Endothelial cell of umbilical vein (primary cell): ENCODE measurements at regions of chr11 and their contacts with region 1.

Region 1: GRCh38 chr11:79076526-79077115 is 364.2 kb downstream of the TENM4 start:
- DNase-seq: peak; percentile 50
- H3K4me3 ChIP-seq: no peak overlapping the region
- H3K27ac ChIP-seq: no peak overlapping the region
- H3K4me1 ChIP-seq: no peaks in the 10 kb centered on the region
- H3K27me3 ChIP-seq: no peaks in the 10 kb centered on the region
- CTCF ChIP-seq: peak; percentile 63 to 69
- POLR2A ChIP-seq: no peak

Region 2: GRCh38 chr11:78902771-78903507 is 173.7 kb before region 1 on chr11:
- CTCF ChIA-PET with region 1: interaction called, 4 read pairs
- POLR2A ChIA-PET with region 1: no interaction called
- dilution Hi-C with region 1: no loop called
- intact Hi-C with region 1: loop called (anchors 1 kb)
- DNase-seq: peak; percentile 4
- H3K4me3 ChIP-seq: no peak overlapping the region
- H3K27ac ChIP-seq: no peak overlapping the region
- H3K4me1 ChIP-seq: no peaks in the 10 kb centered on the region
- H3K27me3 ChIP-seq: no peaks in the 10 kb centered on the region
- CTCF ChIP-seq: peak in 1 of 2 donors; percentile 50
- POLR2A ChIP-seq: no peak

Region 3: DNA sequence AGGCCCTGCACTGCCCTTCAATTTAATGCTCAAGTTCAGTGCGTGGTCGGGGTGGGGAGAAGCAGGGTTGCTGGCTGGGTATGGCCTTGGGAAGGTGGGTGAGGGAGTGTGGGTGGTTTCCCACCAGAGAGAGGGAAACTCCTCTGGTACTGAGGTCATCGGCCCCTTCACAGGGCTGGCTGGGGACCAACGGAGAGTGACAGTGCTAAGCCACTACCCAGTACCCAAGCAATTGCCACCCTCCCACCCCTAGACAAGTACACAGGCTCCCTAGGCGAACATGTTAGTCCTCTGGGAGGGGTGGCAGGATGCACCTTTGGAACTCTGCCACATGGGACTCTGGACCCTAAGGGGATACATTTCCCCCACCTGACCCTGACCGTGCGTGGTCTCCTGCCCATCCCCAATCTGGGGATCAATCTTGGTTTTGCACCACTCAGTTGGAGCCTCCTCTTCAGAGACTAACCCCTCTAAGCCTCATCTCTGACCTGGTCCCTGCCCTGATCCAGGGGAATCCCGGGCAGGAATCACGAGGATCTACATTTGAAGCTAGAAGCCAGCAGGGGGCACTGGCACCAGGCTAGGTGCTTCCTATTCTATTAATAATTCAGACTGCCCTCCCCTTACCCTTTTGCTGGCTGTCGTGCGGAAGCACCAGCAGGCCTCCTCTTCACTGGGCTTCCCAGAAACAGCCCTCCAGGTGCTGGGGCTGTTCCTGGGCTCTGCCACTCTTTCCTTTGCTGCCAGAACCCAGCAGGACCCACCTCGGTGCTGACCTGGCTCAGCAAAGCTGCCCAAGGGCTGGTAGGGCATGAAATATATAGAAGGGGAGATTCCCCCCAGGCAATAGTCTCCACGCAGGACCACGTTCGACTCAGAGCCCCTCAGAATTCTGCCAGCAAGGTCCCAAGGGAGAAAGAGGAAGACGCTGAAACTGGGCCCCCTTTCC is 13.5 kb before region 1 on chr11:
- CTCF ChIA-PET with region 1: interaction called, 6 read pairs
- POLR2A ChIA-PET with region 1: no interaction called
- dilution Hi-C with region 1: no loop called
- intact Hi-C with region 1: loop called (anchors 2 kb)
- DNase-seq: peak; percentile 46
- H3K4me3 ChIP-seq: no peak overlapping the region
- H3K27ac ChIP-seq: no peak overlapping the region
- H3K4me1 ChIP-seq: no peaks in the 10 kb centered on the region
- H3K27me3 ChIP-seq: peaks cover 0 to 6% of the 10 kb centered on the region in 2 experiments
- CTCF ChIP-seq: peak; percentile 53 to 63
- POLR2A ChIP-seq: no peak

Region 4: GRCh38 chr11:79087238-79087960 is 10.8 kb after region 1 on chr11:
- CTCF ChIA-PET with region 1: interaction called, 11 read pairs
- POLR2A ChIA-PET with region 1: no interaction called
- dilution Hi-C with region 1: no loop called
- intact Hi-C with region 1: no loop called
- DNase-seq: peak; percentile 76
- H3K4me3 ChIP-seq: no peak overlapping the region
- H3K27ac ChIP-seq: peak overlapping the region; percentile 30
- H3K4me1 ChIP-seq: peaks cover 20% of the 10 kb centered on the region
- H3K27me3 ChIP-seq: no peaks in the 10 kb centered on the region
- CTCF ChIP-seq: no peak
- POLR2A ChIP-seq: no peak

Region 5: GRCh38 chr11:79094601-79095000 is 18.0 kb after region 1 on chr11:
- CTCF ChIA-PET with region 1: interaction called, 85 read pairs
- POLR2A ChIA-PET with region 1: no interaction called
- dilution Hi-C with region 1: no loop called
- intact Hi-C with region 1: loop called (anchors 2 kb)
- DNase-seq: no peak
- H3K4me3 ChIP-seq: no peak overlapping the region
- H3K27ac ChIP-seq: no peak overlapping the region
- H3K4me1 ChIP-seq: peaks cover 9% of the 10 kb centered on the region
- H3K27me3 ChIP-seq: no peaks in the 10 kb centered on the region
- CTCF ChIP-seq: no peak
- POLR2A ChIP-seq: no peak